ENCODE measurements at regions of chr3 and their contacts with region 1.

Region 1: GRCh38 chr3:37967260-37967881 is 23.2 kb upstream of the VILL start:
- DNase-seq: peak; percentile 65 to 82 (median 76)
- H3K4me3 ChIP-seq: no peak overlapping the region
- H3K27ac ChIP-seq: no peak overlapping the region
- H3K4me1 ChIP-seq: peaks cover 0 to 15% (median 4%) of the 10 kb centered on the region in 4 experiments
- H3K27me3 ChIP-seq: no peaks in the 10 kb centered on the region

Region 2: GRCh38 chr3:37862219-37862902 is 105.0 kb before region 1 on chr3:
- CTCF ChIA-PET with region 1: interaction called, 41 read pairs
- POLR2A ChIA-PET with region 1: interaction called, 4 read pairs
- DNase-seq: peak; percentile 25 to 75 (median 57)
- H3K4me3 ChIP-seq: peak overlapping the region; percentile 60 to 92 (median 77)
- H3K27ac ChIP-seq: no peak overlapping the region
- H3K4me1 ChIP-seq: peaks cover 0 to 43% (median 34%) of the 10 kb centered on the region in 4 experiments
- H3K27me3 ChIP-seq: no peaks in the 10 kb centered on the region

Region 3: DNA sequence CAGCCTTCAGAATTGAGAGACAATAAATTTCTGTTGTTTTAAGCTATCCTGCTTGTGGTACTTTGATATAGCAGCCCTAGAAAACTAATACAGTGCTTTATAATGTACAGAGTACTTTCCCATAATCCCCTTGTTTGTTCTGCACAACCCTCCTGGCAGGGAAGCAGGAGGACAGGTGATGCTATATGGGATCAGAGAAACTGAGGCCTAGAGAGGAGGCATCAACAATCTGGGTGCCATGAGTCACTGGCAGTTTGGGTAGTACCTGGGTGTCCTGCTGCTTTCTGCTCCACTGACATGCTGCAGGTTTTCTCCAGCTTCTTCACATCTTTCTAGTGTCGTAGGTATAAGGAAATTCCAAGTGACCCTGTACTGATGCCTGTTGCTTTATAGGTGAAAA is 50.7 kb before region 1 on chr3:
- CTCF ChIA-PET with region 1: interaction called, 102 read pairs
- POLR2A ChIA-PET with region 1: no interaction called
- DNase-seq: no peak
- H3K4me3 ChIP-seq: no peak overlapping the region
- H3K27ac ChIP-seq: no peak overlapping the region
- H3K4me1 ChIP-seq: peaks cover 0 to 58% (median 33%) of the 10 kb centered on the region in 4 experiments
- H3K27me3 ChIP-seq: no peaks in the 10 kb centered on the region

Region 4: DNA sequence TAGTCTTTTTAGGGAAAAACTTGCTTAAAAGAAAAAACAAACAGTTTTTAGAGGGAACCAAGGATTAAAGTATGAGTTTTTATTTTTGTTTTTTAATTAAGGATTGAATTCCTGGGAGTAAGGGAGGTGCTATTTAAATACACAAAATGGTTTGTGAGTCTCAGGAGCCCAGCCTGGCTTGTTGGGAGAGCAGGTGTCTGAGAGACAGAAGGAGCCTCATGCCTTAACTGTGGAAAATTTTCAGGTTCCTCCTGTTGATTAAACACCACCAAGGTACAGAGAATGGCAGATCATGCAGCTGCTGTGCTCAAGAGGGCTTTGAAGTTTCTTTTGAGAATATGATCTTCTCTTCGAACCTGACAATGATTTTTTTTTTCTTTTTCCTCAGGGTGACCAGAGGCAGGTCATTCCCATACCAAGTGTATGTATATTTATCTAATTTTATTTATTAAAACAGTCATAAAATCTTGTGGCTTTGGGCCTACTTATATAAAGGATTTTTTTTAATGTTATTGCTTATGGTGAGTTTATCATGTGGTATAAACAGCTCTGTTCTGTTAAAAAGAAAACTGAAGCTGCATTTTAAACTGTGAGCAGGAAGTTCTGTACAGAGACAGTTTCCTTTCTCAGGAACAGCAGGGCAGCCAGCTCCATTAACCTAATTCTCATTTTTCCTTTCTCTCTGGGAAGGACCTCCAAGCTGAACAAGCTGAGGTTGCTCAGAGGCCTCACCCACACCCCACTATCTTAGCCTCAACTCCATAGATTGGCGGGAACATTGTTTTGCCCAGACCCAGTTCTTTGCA is 10.4 kb before region 1 on chr3:
- CTCF ChIA-PET with region 1: interaction called, 65 read pairs
- POLR2A ChIA-PET with region 1: no interaction called
- DNase-seq: peak in 2 of 3 donors; percentile 38 to 47
- H3K4me3 ChIP-seq: peak overlapping the region in 4 of 7 experiments; percentile 7 to 54 (median 36)
- H3K27ac ChIP-seq: peak overlapping the region; percentile 58 to 78
- H3K4me1 ChIP-seq: peaks cover 17 to 63% (median 40%) of the 10 kb centered on the region in 4 experiments
- H3K27me3 ChIP-seq: no peaks in the 10 kb centered on the region

Region 5: GRCh38 chr3:38004415-38005076 is 37.2 kb after region 1 on chr3:
- CTCF ChIA-PET with region 1: interaction called, 19 read pairs
- POLR2A ChIA-PET with region 1: no interaction called
- DNase-seq: peak; percentile 51 to 68 (median 62)
- H3K4me3 ChIP-seq: no peak overlapping the region
- H3K27ac ChIP-seq: no peak overlapping the region
- H3K4me1 ChIP-seq: no peaks in the 10 kb centered on the region
- H3K27me3 ChIP-seq: no peaks in the 10 kb centered on the region

Region 6: GRCh38 chr3:38039101-38039898 is 71.9 kb after region 1 on chr3 and contains the start of gene DLEC1:
- CTCF ChIA-PET with region 1: no interaction called
- POLR2A ChIA-PET with region 1: no interaction called
- DNase-seq: peak; percentile 71 to 87 (median 86)
- H3K4me3 ChIP-seq: peak within 1 kb of the TSS in 6 of 7 experiments; percentile 34 to 72 (median 58)
- H3K27ac ChIP-seq: no peak within 1 kb of the TSS
- H3K4me1 ChIP-seq: peaks cover 7 to 25% (median 21%) of the 10 kb centered on the region in 4 experiments
- H3K27me3 ChIP-seq: no peaks in the 10 kb centered on the region